Caco-2 (cell line): ENCODE measurements at regions of chr2 and their contacts with region 1.

Region 1: DNA sequence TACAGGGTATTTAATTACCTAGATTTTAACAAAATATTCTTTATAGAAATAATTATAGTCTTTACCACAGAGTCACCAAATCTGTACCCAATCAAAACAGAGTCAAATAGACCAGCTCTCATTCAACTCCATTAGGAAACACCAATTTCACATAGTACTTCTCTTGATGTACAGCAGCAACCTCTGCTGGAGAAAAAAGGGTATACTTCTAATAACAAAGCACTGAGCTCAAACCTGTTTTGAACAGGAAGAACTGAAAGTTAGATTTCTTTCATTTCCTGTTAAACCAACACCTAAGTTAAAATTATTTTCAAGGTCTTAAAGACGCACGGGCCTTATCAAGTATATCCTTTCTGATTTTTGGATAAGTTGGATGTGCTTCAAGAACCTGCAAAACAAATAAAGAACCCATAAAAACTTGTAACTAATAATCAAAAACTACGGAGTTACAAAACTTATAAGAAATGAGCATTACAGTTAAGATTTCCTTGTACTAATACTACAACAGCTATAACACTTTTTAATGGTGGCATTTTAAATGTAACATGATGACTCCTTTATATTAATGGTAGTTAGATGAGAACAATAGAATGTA is 79.0 kb downstream of the TTC21B start:
- DNase-seq: peak in 1 of 2 experiments; percentile 42
- H3K4me3 ChIP-seq: no peak overlapping the region
- H3K4me3 Mint-ChIP-seq: no peak overlapping the region
- H3K27ac Mint-ChIP-seq: no peak overlapping the region
- H3K4me1 ChIP-seq: peaks cover 8% of the 10 kb centered on the region
- H3K4me1 Mint-ChIP-seq: peaks cover 12% of the 10 kb centered on the region
- H3K27me3 ChIP-seq: no peaks in the 10 kb centered on the region
- H3K27me3 Mint-ChIP-seq: no peaks in the 10 kb centered on the region
- CTCF ChIP-seq: peak; percentile 48 to 60

Region 2: DNA sequence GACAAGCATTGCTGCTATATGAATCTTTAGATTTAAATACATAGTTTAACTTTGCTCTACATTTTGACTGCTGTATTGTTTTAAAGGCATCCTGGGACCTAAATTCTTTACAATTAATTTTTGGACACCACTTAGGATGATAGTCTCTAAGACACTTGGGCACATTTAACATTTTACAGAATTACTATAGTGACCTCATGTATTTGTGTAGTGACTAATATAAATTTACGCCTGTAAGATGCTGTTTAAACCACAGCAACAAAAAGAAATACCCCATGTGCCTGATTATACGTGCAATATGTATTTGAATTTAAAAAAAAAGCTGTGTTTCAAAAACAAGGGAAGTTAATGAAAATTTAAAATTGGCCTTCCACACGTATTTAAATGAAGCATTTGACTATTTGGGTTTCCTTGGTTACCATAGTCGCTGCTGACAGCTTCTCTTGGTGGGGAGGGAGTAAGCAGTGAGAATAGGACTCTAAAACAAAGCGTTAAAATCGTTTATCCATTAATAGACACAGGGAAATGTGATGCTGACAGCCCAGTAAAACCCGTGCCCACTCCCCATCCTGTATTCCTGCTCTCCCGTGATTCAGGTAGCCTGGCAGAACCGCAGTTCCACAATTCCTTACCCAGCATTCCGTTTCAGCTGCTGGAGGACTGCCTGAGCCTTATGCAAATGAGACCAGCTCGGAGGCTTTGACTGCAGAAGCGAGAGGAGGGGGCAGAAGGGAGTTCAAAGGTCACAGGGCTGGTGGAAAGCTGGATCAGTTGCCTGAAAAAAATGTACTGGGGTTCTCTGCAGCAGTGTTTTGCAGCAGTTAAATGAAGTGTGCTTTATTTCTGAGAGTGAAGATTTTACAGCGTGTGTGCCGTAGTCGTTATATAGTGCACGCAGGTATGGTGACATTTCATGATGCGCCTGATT is 300.7 kb before region 1 on chr2:
- CTCF ChIA-PET with region 1: interaction called, 3 read pairs
- POLR2A ChIA-PET with region 1: no interaction called
- intact Hi-C with region 1: loop called (anchors 5 kb)
- DNase-seq: peak; percentile 82 to 83
- H3K4me3 ChIP-seq: peak overlapping the region; percentile 36
- H3K4me3 Mint-ChIP-seq: peak overlapping the region; percentile 79
- H3K27ac Mint-ChIP-seq: peak overlapping the region; percentile 27
- H3K4me1 ChIP-seq: peaks cover 4% of the 10 kb centered on the region; the same call in 1 of the 2 replicates
- H3K4me1 Mint-ChIP-seq: peaks cover 5% of the 10 kb centered on the region
- H3K27me3 ChIP-seq: no peaks in the 10 kb centered on the region
- H3K27me3 Mint-ChIP-seq: no peaks in the 10 kb centered on the region
- CTCF ChIP-seq: no peak

Region 3: DNA sequence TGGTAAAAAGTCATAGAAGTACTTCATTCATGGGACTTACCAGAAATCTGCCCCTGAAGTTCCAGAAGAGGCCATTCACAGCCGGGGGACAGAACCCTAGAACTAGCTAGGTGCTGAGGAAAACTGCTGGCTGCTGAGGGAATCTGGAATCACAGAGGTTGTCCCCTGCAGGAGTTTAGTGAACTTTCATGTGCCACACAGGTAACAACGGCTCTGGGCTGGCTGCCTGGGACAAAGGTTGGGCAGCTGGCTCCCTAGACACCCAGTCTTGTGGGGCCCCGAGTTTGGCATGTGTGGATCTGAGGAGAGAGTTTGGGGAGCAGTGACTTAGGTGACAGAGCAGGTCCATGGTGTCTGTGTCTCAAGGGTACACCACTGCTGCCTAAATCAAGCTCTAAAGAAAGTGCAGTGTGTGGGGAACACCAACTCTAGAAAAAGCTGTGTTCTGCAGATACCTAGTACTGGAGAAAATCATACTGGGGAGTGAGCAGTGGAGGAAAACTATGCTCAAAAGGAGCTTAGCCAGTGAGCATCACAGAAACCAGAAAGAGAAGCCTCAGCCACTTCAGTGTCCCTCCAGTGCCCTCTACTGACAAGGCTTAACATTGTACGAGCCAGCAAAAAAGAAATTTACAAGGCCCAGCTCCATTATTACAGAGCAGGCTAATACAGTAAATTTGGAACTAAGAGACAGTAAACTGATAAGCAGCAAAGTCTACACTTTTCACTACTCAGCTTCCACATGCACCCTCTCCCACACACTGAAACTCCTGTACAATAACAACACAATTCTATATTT is 95.7 kb before region 1 on chr2:
- CTCF ChIA-PET with region 1: interaction called, 24 read pairs
- POLR2A ChIA-PET with region 1: no interaction called
- intact Hi-C with region 1: loop called (anchors 1 kb)
- DNase-seq: peak in 1 of 2 experiments; percentile 57
- H3K4me3 ChIP-seq: no peak overlapping the region
- H3K4me3 Mint-ChIP-seq: no peak overlapping the region
- H3K27ac Mint-ChIP-seq: no peak overlapping the region
- H3K4me1 ChIP-seq: peaks cover 6% of the 10 kb centered on the region; the same call in 1 of the 2 replicates
- H3K4me1 Mint-ChIP-seq: peaks cover 7% of the 10 kb centered on the region
- H3K27me3 ChIP-seq: no peaks in the 10 kb centered on the region
- H3K27me3 Mint-ChIP-seq: no peaks in the 10 kb centered on the region
- CTCF ChIP-seq: peak; percentile 59 to 65

Region 4: GRCh38 chr2:165794536-165794928 is 80.0 kb before region 1 on chr2:
- CTCF ChIA-PET with region 1: interaction called, 23 read pairs
- POLR2A ChIA-PET with region 1: interaction called, 9 read pairs
- intact Hi-C with region 1: loop called (anchors 1 kb)
- DNase-seq: peak in 1 of 2 experiments; percentile 46
- H3K4me3 ChIP-seq: peak overlapping the region; percentile 87
- H3K4me3 Mint-ChIP-seq: peak overlapping the region; percentile 97
- H3K27ac Mint-ChIP-seq: peak overlapping the region; percentile 98
- H3K4me1 ChIP-seq: no peaks in the 10 kb centered on the region
- H3K4me1 Mint-ChIP-seq: peaks cover 11% of the 10 kb centered on the region
- H3K27me3 ChIP-seq: no peaks in the 10 kb centered on the region
- H3K27me3 Mint-ChIP-seq: no peaks in the 10 kb centered on the region
- CTCF ChIP-seq: no peak

Region 5: GRCh38 chr2:165959371-165959770 is 84.8 kb after region 1 on chr2:
- CTCF ChIA-PET with region 1: no interaction called
- POLR2A ChIA-PET with region 1: no interaction called
- intact Hi-C with region 1: no loop called
- DNase-seq: no peak
- H3K4me3 ChIP-seq: no peak overlapping the region
- H3K4me3 Mint-ChIP-seq: no peak overlapping the region
- H3K27ac Mint-ChIP-seq: no peak overlapping the region
- H3K4me1 ChIP-seq: peaks cover 6% of the 10 kb centered on the region
- H3K4me1 Mint-ChIP-seq: peaks cover 7% of the 10 kb centered on the region
- H3K27me3 ChIP-seq: no peaks in the 10 kb centered on the region
- H3K27me3 Mint-ChIP-seq: peaks cover 6% of the 10 kb centered on the region
- CTCF ChIP-seq: no peak

Region 6: DNA sequence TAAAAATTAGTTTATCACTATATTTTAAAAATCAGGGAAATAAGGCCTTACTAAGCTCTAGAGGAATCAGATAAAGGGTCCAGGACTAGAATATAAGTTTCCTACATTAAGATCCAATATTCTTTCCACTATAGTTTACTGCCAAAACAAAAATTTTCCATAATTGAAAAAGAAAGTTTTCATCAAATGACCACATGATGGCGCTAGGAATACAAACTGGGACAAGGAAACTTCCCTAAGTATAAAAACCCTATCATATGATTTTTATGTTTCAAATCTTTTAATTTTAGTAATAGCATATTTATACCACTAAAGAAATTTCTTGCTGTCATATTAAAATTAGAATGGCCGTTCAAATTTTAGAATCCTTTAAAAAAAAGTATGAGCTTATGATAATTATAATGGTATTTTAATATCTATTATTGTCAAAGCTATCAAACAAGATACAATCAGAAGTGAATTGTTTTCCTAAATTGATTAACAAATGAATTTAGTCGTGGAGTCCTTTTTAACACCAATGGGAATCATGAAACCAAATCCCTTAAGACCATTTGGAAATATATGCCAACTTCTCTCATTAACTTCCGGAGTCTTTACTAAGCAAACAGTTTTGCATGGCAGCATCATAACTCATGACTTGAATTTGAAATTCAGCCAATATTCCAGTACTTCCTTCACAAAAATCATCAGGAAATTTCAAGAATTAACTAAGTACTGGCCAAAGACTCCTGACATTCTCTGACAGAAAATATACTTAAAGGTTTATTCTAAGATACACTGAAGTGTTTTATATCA is 183.0 kb after region 1 on chr2:
- CTCF ChIA-PET with region 1: no interaction called
- POLR2A ChIA-PET with region 1: no interaction called
- intact Hi-C with region 1: no loop called
- DNase-seq: peak in 1 of 2 experiments; percentile 5
- H3K4me3 ChIP-seq: no peak overlapping the region
- H3K4me3 Mint-ChIP-seq: no peak overlapping the region
- H3K27ac Mint-ChIP-seq: no peak overlapping the region
- H3K4me1 ChIP-seq: no peaks in the 10 kb centered on the region
- H3K4me1 Mint-ChIP-seq: no peaks in the 10 kb centered on the region
- H3K27me3 ChIP-seq: no peaks in the 10 kb centered on the region
- H3K27me3 Mint-ChIP-seq: peaks cover 4% of the 10 kb centered on the region
- CTCF ChIP-seq: peak; percentile 53 to 58